ENCODE measurements at regions of chr11 and their contacts with region 1.

Region 1: DNA sequence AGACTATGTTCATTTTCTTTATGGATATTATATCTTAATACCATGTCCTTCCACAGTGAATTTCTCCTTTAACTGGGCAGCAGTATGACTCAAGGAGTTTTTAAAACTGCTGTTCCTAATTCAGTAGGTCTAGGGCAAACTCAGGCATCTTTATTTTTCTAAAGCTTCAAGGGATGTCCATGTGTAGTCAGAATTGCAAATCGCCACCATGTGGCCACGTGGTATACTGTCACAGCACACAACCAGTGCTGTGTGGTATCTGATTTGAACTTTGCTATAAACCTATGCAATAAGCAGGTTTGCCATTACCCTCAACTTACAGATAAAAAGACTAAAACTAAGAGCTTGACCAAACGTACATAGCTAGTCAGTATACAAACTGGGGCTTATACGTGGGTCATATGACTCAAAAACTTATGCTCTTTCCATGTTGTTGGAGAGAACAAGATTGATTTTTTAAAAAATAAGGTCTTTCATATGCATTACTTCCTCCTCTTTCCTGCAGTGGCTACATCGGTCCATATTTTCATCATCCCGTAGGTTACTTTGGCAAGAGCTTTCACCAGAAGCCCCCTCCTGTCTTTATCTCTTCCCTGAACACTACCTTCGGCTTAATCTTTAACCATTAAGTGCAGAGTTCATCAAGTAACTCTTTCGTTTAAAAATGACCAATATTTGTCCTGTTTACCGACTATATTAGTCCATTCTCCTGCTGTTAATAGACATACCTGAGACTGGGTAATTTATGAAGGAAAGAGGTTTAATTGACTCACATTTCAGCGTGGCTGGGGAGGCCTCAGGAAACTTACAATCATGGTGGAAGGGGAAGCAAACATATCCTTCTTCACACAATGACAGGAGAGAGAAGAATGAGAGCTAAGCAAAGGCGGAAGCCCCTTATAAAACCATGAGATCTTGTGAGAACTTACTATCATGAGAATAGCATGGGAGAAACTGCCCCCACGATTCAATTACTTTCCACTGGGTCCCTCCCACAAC is 8.0 kb upstream of the HTATIP2 start:
- DNase-seq: peak; percentile 64
- H3K4me3 ChIP-seq: no peak overlapping the region
- H3K27ac ChIP-seq: no peak overlapping the region
- H3K4me1 ChIP-seq: peaks cover 6% of the 10 kb centered on the region
- H3K27me3 ChIP-seq: peaks cover 2 to 10% of the 10 kb centered on the region in 2 experiments
- CTCF ChIP-seq: peak; percentile 47 to 68
- POLR2A ChIP-seq: no peak

Region 2: DNA sequence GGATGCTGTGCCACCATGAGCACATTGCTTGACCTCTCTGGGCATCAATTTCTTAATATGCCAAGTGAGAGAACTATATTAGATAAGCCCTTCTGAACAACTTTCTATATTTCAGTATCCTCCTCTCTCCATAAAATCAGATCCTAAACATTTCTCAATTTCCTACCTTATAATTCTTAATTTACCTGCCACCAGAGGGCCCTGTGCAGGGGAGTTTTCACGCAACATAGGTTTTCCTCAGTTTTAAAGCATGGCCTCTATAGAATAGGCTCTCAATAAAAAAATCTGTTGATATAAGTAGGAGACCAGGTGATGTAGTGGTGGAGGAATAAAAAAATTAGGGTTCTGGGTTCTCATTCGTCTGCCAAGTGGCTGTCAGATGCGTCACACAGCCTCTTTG is 111.5 kb before region 1 on chr11:
- CTCF ChIA-PET with region 1: interaction called, 3 read pairs
- POLR2A ChIA-PET with region 1: no interaction called
- dilution Hi-C with region 1: no loop called
- intact Hi-C with region 1: loop called (anchors 1 kb)
- DNase-seq: no peak
- H3K4me3 ChIP-seq: no peak overlapping the region
- H3K27ac ChIP-seq: no peak overlapping the region
- H3K4me1 ChIP-seq: no peaks in the 10 kb centered on the region
- H3K27me3 ChIP-seq: peaks cover 15 to 32% of the 10 kb centered on the region in 2 experiments
- CTCF ChIP-seq: peak; percentile 6 to 7
- POLR2A ChIP-seq: no peak

Region 3: GRCh38 chr11:20373568-20374209 is 18.2 kb after region 1 on chr11:
- CTCF ChIA-PET with region 1: interaction called, 10 read pairs
- POLR2A ChIA-PET with region 1: no interaction called
- dilution Hi-C with region 1: no loop called
- intact Hi-C with region 1: no loop called
- DNase-seq: no peak
- H3K4me3 ChIP-seq: no peak overlapping the region
- H3K27ac ChIP-seq: no peak overlapping the region
- H3K4me1 ChIP-seq: no peaks in the 10 kb centered on the region
- H3K27me3 ChIP-seq: no peaks in the 10 kb centered on the region
- CTCF ChIP-seq: no peak
- POLR2A ChIP-seq: no peak